HepG2 (cell line): ENCODE measurements at regions of chr6 and their contacts with region 1.

Region 1: DNA sequence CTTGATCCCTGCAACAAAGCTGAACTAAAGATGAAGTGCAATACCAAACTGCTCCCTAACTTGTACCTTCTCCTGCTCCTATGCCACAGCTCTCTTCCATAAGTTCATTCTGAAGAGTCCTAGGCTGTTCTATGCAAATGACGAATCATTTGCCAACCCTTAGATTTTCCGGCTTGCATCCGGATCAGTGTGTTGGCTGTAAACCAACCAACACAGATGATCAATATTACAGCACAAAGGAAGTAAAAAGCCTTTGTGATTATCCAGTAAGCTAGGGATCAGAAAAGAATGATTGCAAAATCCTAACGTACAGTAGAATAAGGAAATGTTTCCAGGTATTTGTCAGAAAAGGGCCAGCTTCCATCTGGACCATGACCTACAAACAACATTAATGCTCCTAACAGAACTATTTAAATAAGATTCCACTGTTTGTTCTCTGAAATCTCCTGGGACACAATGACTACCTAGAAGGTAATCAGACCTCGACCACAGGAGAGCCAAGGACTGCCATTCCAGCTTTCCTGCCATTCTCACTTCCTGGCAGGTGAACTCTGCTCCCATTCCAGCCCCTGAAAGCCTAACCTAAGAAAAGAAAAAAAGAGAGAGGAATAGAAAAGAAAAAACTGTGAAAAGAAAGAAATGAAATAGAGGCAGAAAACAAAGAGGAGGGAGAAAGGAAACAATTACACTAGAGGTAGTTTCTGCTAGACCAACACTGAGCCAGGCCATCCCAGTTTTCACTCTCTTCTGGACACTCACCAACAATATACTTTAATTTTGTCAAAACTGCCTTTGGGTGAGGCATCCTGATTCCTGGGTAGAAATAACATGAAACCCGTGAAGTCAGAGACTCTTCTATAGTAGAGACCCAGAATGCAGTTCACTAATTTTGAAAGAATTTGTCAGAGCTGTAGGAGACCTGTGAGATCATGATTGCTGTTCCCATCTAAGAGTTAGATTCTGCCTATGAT is 19.7 kb downstream of the GMDS start:
- DNase-seq: peak; percentile 99
- ATAC-seq: peak; percentile 88
- H3K4me3 ChIP-seq: peak overlapping the region; percentile 1 to 49 (median 7); a peak in 3 of 6 replicates
- H3K27ac ChIP-seq: peak overlapping the region; percentile 85
- H3K4me1 ChIP-seq: peaks cover 99% of the 10 kb centered on the region
- H3K27me3 ChIP-seq: no peaks in the 10 kb centered on the region
- CTCF ChIP-seq: no peak
- EP300 ChIP-seq: peak; percentile 34 to 96; a peak in 3 of 4 replicates
- POLR2A ChIP-seq: peak in 1 of 2 experiments; percentile 39; a peak in 1 of 4 replicates
- RAD21 ChIP-seq: no peak

Region 2: DNA sequence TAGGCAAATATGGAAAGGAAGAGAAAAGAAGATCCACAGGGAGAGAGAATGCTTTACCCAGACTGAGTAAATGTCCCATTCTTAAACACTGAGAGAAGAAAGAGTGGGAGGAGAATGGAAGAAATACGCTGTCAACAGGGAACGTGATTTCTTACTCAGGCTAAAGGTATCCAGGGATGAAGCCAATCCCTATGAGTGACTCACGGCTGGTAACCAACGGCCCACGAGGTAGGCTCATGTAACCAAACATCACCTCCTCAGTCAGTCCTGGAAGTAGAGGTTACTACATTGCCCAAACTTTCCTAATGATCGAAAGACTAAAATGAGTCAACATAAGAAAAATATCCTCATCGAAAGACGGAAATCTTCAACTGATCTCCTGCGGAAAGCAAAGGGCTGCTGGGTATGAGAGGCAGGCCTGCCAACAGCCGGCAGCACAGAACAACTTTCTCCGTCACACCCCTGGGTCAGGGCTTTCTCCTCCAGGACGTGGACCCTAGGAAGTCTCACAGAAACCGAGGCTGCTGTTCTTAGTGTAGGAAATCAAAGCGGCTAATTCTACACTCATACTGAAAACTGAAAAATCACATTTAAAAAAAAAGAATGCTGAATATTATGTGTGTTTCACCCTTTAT is 272.9 kb before region 1 on chr6:
- CTCF ChIA-PET with region 1: no interaction called
- POLR2A ChIA-PET with region 1: no interaction called
- in situ Hi-C with region 1: no loop called
- intact Hi-C with region 1: no loop called
- DNase-seq: no peak
- ATAC-seq: no peak
- H3K4me3 ChIP-seq: no peak overlapping the region
- H3K27ac ChIP-seq: no peak overlapping the region
- H3K4me1 ChIP-seq: no peaks in the 10 kb centered on the region
- H3K27me3 ChIP-seq: no peaks in the 10 kb centered on the region
- CTCF ChIP-seq: no peak
- EP300 ChIP-seq: no peak
- POLR2A ChIP-seq: no peak
- RAD21 ChIP-seq: no peak

Region 3: GRCh38 chr6:2162089-2162465 is 63.6 kb before region 1 on chr6:
- CTCF ChIA-PET with region 1: no interaction called
- POLR2A ChIA-PET with region 1: no interaction called
- in situ Hi-C with region 1: no loop called
- intact Hi-C with region 1: loop called (anchors 5 kb)
- DNase-seq: no peak
- ATAC-seq: no peak
- H3K4me3 ChIP-seq: no peak overlapping the region
- H3K27ac ChIP-seq: no peak overlapping the region
- H3K4me1 ChIP-seq: peaks cover 43% of the 10 kb centered on the region
- H3K27me3 ChIP-seq: no peaks in the 10 kb centered on the region
- CTCF ChIP-seq: no peak
- EP300 ChIP-seq: no peak
- POLR2A ChIP-seq: no peak
- RAD21 ChIP-seq: no peak

Region 4: GRCh38 chr6:2245094-2245876 is 19.6 kb after region 1 on chr6 and contains the start of gene GMDS:
- CTCF ChIA-PET with region 1: no interaction called
- POLR2A ChIA-PET with region 1: interaction called, 21 read pairs
- in situ Hi-C with region 1: no loop called
- intact Hi-C with region 1: loop called (anchors 2 kb)
- DNase-seq: peak; percentile 85
- ATAC-seq: peak; percentile 97
- H3K4me3 ChIP-seq: peak within 1 kb of the TSS; percentile 90 to 97 (median 96)
- H3K27ac ChIP-seq: peak within 1 kb of the TSS; percentile 92
- H3K4me1 ChIP-seq: peaks cover 68% of the 10 kb centered on the region
- H3K27me3 ChIP-seq: no peaks in the 10 kb centered on the region; a peak in 1 of 5 replicates
- CTCF ChIP-seq: peak; percentile 37; the same call in 1 of the 2 replicates
- EP300 ChIP-seq: 0 out of 4 replicates have a peak, but pooled peaks of 1 of the 2 experiments have one; percentile 1
- POLR2A ChIP-seq: peak; percentile 87 to 97
- RAD21 ChIP-seq: peak; percentile 71
- total RNA-seq, gene GMDS: 59.6 and 64.4 TPM in 2 replicates